A673 (cell line): ENCODE measurements at regions of chr1 and their contacts with region 1.

Region 1: DNA sequence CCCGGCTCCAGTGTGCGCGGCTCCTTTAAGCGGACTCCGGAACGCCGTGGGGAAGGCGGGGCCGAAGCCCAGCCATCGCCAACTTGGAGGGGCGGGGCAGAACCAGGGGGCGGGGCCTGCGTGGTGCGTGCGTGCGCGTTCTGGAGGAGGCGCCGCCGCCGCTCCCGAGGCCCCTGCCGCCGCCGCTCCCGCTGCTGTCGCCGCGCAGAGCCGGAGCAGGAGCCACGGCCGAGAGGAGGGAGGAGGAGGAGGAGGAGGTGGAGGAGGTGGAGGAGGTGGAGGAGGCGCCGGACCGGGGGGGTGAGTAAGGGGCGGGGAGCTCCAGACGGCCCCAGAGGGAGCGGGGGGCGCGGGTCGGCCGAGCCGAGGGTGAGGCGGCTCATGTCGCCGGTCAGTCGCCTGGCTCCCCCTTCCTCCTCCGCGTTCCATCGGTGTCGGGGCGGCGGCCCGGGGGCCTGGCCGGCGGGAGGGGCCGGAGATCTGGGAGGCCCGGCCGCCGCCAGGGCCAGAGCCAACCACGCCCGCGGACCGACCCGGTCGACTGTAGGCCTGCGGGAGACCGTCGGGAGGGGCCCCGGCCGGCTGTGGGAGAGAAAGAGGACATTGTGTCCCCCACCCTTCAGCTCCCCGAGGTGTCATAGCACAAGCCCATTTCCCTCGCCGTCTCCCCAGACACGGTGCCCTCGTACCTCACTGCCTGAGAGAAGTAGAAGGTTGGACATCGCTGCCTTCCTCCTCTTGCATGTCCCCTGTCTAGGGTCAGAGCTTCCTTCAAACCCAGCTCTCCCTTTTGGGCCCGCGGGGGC is at the start of gene RAP1A:
- DNase-seq: peak; percentile 95
- H3K4me3 ChIP-seq: peak within 1 kb of the TSS; percentile 92
- H3K27ac ChIP-seq: peak within 1 kb of the TSS; percentile 75
- H3K4me1 ChIP-seq: no peaks in the 10 kb centered on the region
- H3K27me3 ChIP-seq: no peaks in the 10 kb centered on the region
- CTCF ChIP-seq: no peak
- total RNA-seq, gene RAP1A: 50.9 and 52.8 TPM in 2 replicates

Region 2: DNA sequence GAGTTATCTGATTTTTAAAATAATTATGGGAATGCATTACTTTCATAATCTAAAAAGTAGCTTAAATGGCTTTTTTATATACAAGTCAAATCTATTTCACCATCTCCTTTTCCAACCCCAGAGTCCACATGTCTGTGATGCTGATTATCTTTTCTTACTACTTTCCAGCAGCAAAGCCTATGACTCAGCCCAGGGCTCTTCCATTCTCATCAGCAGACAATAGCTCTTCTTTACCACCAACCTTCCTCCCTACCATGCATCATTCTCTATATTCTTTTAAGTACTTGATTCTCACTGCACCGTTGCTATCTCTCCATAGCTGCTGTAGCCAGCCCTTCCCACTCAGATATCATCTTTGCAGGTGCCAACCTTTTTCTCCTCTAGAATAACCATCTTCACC is 253.6 kb before region 1 on chr1:
- CTCF ChIA-PET with region 1: no interaction called
- POLR2A ChIA-PET with region 1: no interaction called
- intact Hi-C with region 1: no loop called
- DNase-seq: no peak
- H3K4me3 ChIP-seq: no peak overlapping the region
- H3K27ac ChIP-seq: no peak overlapping the region
- H3K4me1 ChIP-seq: no peaks in the 10 kb centered on the region
- H3K27me3 ChIP-seq: peaks cover 28% of the 10 kb centered on the region
- CTCF ChIP-seq: no peak

Region 3: GRCh38 chr1:111553196-111553595 is 66.6 kb before region 1 on chr1:
- CTCF ChIA-PET with region 1: interaction called, 3 read pairs
- POLR2A ChIA-PET with region 1: interaction called, 10 read pairs
- intact Hi-C with region 1: no loop called
- DNase-seq: no peak
- H3K4me3 ChIP-seq: no peak overlapping the region
- H3K27ac ChIP-seq: no peak overlapping the region
- H3K4me1 ChIP-seq: no peaks in the 10 kb centered on the region
- H3K27me3 ChIP-seq: peaks cover 12% of the 10 kb centered on the region
- CTCF ChIP-seq: no peak

Region 4: GRCh38 chr1:111638320-111638719 is 18.5 kb after region 1 on chr1:
- CTCF ChIA-PET with region 1: no interaction called
- POLR2A ChIA-PET with region 1: interaction called, 11 read pairs
- intact Hi-C with region 1: no loop called
- DNase-seq: no peak
- H3K4me3 ChIP-seq: no peak overlapping the region
- H3K27ac ChIP-seq: no peak overlapping the region
- H3K4me1 ChIP-seq: no peaks in the 10 kb centered on the region
- H3K27me3 ChIP-seq: no peaks in the 10 kb centered on the region
- CTCF ChIP-seq: no peak

Region 5: GRCh38 chr1:111702504-111703050 is 82.7 kb after region 1 on chr1:
- CTCF ChIA-PET with region 1: no interaction called
- POLR2A ChIA-PET with region 1: interaction called, 14 read pairs
- intact Hi-C with region 1: no loop called
- DNase-seq: no peak
- H3K4me3 ChIP-seq: no peak overlapping the region
- H3K27ac ChIP-seq: no peak overlapping the region
- H3K4me1 ChIP-seq: no peaks in the 10 kb centered on the region
- H3K27me3 ChIP-seq: no peaks in the 10 kb centered on the region
- CTCF ChIP-seq: no peak